PC-9 (cell line): ENCODE measurements at regions of chr12 and their contacts with region 1.

Region 1: GRCh38 chr12:28390761-28391385 is 200.6 kb downstream of the CCDC91 start:
- DNase-seq: no peak
- H3K4me3 ChIP-seq: no peak overlapping the region
- H3K27ac ChIP-seq: no peak overlapping the region
- H3K4me1 ChIP-seq: no peaks in the 10 kb centered on the region
- H3K27me3 ChIP-seq: no peaks in the 10 kb centered on the region
- CTCF ChIP-seq: no peak

Region 2: DNA sequence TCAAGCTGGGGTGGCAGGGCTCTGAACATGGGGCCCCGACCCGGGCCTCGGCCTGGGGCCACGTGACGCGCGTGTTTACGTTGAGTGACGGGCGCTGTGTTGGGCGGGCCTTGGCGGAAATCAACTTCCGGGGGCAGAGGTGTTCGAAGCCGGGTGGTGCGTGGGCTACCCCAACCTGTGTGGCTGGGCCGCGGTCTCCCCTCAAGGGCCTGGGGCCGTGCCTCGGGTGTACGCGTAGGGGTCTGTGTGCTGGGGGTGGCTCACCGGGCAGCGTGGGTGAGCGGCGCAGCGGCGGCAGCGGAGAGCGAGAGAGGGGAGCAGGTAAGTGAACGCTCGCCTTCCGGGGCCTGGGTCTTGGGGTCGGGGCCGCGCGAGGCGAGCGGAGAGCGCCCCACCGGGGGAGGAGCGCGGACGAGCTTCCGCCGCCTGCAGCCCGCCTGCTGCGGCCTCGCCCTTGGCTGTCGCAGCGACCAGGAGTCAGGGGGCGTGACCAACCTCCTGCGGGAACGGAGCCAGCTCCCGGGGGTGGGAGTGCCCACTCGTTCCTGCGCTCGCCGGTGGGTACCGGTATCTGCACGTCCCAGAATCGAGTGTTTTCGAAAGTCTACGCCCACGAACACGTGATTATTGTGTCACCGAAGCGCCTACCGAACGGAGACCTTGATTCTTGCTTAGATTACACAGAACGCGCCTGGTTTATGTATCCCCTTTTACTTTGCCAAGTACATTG is 200.4 kb before region 1 on chr12 and contains the start of gene CCDC91:
- CTCF ChIA-PET with region 1: no interaction called
- POLR2A ChIA-PET with region 1: no interaction called
- intact Hi-C with region 1: no loop called
- DNase-seq: peak; percentile 67 to 92
- H3K4me3 ChIP-seq: peak within 1 kb of the TSS; percentile 66
- H3K27ac ChIP-seq: peak within 1 kb of the TSS; percentile 95
- H3K4me1 ChIP-seq: peaks cover 26% of the 10 kb centered on the region
- H3K27me3 ChIP-seq: no peaks in the 10 kb centered on the region
- CTCF ChIP-seq: no peak
- total RNA-seq, gene CCDC91: 30.7 and 38.9 TPM in 2 replicates

Region 3: DNA sequence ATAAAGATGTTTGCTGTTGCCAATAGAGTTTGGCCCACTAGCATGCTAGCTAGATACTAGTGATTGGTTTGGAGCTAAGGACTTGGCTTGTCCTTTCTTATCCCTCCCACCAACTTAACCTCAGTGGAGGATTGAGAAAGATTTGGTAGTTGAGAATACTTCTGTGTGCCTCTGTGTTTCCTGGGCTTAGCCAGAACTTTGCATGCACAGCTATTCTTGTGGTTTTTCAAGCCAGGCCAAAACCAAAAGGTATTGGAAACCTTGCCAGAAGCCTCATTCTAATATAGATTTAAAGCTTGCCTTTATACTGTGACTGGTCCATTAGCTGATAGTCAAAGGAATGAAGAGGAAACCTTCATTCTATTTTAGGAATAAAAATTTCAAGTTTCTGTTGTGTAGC is 12.1 kb before region 1 on chr12:
- CTCF ChIA-PET with region 1: no interaction called
- POLR2A ChIA-PET with region 1: no interaction called
- intact Hi-C with region 1: no loop called
- DNase-seq: no peak
- H3K4me3 ChIP-seq: no peak overlapping the region
- H3K27ac ChIP-seq: no peak overlapping the region
- H3K4me1 ChIP-seq: no peaks in the 10 kb centered on the region
- H3K27me3 ChIP-seq: no peaks in the 10 kb centered on the region
- CTCF ChIP-seq: no peak

Region 4: GRCh38 chr12:28427051-28427450 is 36.2 kb after region 1 on chr12:
- CTCF ChIA-PET with region 1: no interaction called
- POLR2A ChIA-PET with region 1: interaction called, 10 read pairs
- intact Hi-C with region 1: no loop called
- DNase-seq: no peak
- H3K4me3 ChIP-seq: no peak overlapping the region
- H3K27ac ChIP-seq: no peak overlapping the region
- H3K4me1 ChIP-seq: no peaks in the 10 kb centered on the region
- H3K27me3 ChIP-seq: no peaks in the 10 kb centered on the region
- CTCF ChIP-seq: no peak